ENCODE measurements at regions of chr18 and their contacts with region 1.

Region 1: DNA sequence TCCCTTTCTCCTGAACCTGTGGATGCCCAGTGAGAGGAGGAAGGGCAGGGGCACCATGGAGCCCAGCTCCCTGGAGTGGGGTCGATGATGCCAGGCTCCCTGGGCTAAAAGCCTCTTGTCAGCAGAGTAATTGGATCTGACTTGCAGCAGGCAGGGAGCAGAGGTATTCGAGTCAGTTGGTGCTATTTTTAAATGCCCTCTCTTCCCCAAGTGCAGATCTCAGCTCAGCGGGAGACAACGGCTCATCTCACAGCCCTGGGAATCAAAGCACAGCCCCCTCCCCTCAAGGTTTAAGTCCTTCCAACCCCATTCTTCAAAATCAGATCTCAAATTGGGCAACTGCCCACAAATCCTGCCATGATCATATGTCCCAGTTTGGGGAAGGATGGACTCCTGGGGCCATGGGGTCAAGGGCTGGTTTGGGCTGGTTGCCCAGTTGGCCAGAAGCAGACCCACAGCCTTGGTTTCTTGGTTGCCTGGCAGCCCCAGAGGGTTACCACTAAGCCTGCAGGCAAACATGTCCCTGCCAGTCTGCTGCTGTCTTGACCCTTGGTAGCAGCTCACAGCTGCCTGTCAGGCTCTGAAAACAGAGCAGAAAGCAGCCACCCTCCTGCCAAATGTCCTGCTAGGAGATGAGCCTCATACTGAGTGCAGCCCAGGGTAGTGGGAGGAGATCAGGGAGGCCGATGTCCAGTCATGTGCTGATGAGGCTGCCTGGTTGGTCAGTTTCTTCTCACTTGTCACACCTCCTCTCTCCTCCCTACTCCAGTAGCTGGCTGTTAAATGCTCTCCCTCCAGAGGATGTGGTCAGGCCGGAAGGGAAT is 244.9 kb downstream of the LOXHD1 start:
- DNase-seq: peak; percentile 32
- ATAC-seq: peak; percentile 83 to 87

Region 2: GRCh38 chr18:46333431-46334135 is 78.5 kb before region 1 on chr18:
- intact Hi-C with region 1: loop called in 1 of 2 experiments (anchors 10 kb)
- DNase-seq: peak; percentile 31
- ATAC-seq: peak; percentile 78 to 81